ENCODE measurements at regions of chr16 and their contacts with region 1.

Region 1: GRCh38 chr16:3023669-3024478 is at the starts of genes HCFC1R1 and THOC6:
- DNase-seq: peak; percentile 93 to 98
- H3K4me3 ChIP-seq: peak within 1 kb of the TSS; percentile 76
- H3K27ac ChIP-seq: peak within 1 kb of the TSS; percentile 97
- H3K4me1 ChIP-seq: peaks cover 13% of the 10 kb centered on the region
- H3K27me3 ChIP-seq: no peaks in the 10 kb centered on the region
- CTCF ChIP-seq: no peak
- total RNA-seq, gene HCFC1R1: 118 and 186 TPM in 2 replicates
- total RNA-seq, gene THOC6: 69.9 and 109 TPM in 2 replicates

Region 2: GRCh38 chr16:2770057-2770951 is 253.6 kb before region 1 on chr16:
- CTCF ChIA-PET with region 1: no interaction called
- POLR2A ChIA-PET with region 1: no interaction called
- intact Hi-C with region 1: no loop called
- DNase-seq: peak in 1 of 2 experiments; percentile 39
- H3K4me3 ChIP-seq: no peak overlapping the region
- H3K27ac ChIP-seq: no peak overlapping the region
- H3K4me1 ChIP-seq: peaks cover 2% of the 10 kb centered on the region
- H3K27me3 ChIP-seq: no peaks in the 10 kb centered on the region
- CTCF ChIP-seq: no peak

Region 3: DNA sequence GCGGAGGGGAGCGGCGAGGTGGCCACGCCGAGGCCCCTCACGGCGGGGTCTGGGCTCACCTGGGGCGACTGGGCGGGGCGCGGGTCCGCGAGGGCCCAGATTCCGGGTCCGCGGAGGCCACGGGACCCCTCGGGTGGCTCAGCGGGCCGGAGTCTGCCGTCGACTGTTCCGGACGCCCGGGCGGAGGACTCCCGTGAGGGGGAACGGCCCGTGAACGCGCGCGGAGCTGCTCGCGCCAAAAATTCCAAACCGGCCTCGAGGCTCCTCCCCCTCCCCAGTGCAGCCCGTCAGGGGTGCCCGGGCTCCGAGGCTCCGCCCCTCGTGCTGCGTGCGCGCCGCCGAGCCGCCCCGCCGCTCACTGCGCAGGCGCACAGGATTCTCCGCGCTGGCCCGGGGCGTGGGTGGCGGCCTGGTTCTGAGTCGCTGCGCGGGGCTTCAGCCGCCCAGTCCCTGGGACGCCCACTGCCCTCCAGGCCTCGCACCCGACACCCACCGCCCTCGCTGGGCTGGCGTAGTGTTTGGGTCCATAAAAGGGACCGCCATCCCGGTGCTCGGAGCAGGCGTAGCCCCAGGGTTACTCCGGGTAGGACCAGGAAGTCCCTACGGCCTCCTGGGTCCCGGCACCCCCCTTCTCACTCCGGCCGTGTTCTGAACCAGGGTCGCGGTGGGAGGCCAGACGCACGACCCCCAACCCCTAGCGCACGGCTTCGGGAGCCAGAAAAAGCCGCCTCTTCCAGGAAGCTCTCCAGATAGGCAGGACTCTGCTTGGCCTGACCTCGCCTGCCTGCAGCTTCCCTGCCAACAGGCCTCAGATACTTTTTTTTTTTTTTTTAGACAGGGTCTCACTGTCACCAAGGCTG is 43.4 kb before region 1 on chr16 and contains the start of gene PKMYT1:
- CTCF ChIA-PET with region 1: interaction called, 9 read pairs
- POLR2A ChIA-PET with region 1: interaction called, 5 read pairs
- intact Hi-C with region 1: loop called (anchors 1 kb)
- DNase-seq: peak; percentile 63 to 98
- H3K4me3 ChIP-seq: peak within 1 kb of the TSS; percentile 80
- H3K27ac ChIP-seq: peak within 1 kb of the TSS; percentile 36; the same call in 1 of the 2 replicates
- H3K4me1 ChIP-seq: peaks cover 22% of the 10 kb centered on the region
- H3K27me3 ChIP-seq: no peaks in the 10 kb centered on the region
- CTCF ChIP-seq: no peak
- total RNA-seq, gene PKMYT1: 105 and 112 TPM in 2 replicates

Region 4: GRCh38 chr16:3012828-3013420 is 10.9 kb before region 1 on chr16 and contains the start of gene CLDN9:
- CTCF ChIA-PET with region 1: interaction called, 6 read pairs
- POLR2A ChIA-PET with region 1: interaction called, 34 read pairs
- intact Hi-C with region 1: loop called (anchors 1 kb)
- DNase-seq: peak; percentile 88
- H3K4me3 ChIP-seq: peak within 1 kb of the TSS; percentile 37; the same call in 1 of the 2 replicates
- H3K27ac ChIP-seq: peak within 1 kb of the TSS; percentile 86
- H3K4me1 ChIP-seq: peaks cover 71% of the 10 kb centered on the region
- H3K27me3 ChIP-seq: no peaks in the 10 kb centered on the region
- CTCF ChIP-seq: no peak
- total RNA-seq, gene CLDN9: 14.3 and 16.4 TPM in 2 replicates

Region 5: GRCh38 chr16:3150346-3151218 is 126.7 kb after region 1 on chr16:
- CTCF ChIA-PET with region 1: no interaction called
- POLR2A ChIA-PET with region 1: interaction called, 10 read pairs
- intact Hi-C with region 1: no loop called
- DNase-seq: peak; percentile 91 to 99
- H3K4me3 ChIP-seq: peak overlapping the region; percentile 99
- H3K27ac ChIP-seq: peak overlapping the region; percentile 75
- H3K4me1 ChIP-seq: peaks cover 6% of the 10 kb centered on the region
- H3K27me3 ChIP-seq: no peaks in the 10 kb centered on the region
- CTCF ChIP-seq: no peak

Region 6: GRCh38 chr16:3645504-3646347 is 621.9 kb after region 1 on chr16:
- CTCF ChIA-PET with region 1: no interaction called
- POLR2A ChIA-PET with region 1: interaction called, 15 read pairs
- intact Hi-C with region 1: no loop called
- DNase-seq: no peak
- H3K4me3 ChIP-seq: 0 out of 2 replicates have a peak overlapping the region, but pooled peaks have one; percentile 0
- H3K27ac ChIP-seq: peak overlapping the region; percentile 51
- H3K4me1 ChIP-seq: peaks cover 49% of the 10 kb centered on the region
- H3K27me3 ChIP-seq: no peaks in the 10 kb centered on the region
- CTCF ChIP-seq: no peak